ENCODE measurements at regions of chr1 and their contacts with region 1.

Region 1: DNA sequence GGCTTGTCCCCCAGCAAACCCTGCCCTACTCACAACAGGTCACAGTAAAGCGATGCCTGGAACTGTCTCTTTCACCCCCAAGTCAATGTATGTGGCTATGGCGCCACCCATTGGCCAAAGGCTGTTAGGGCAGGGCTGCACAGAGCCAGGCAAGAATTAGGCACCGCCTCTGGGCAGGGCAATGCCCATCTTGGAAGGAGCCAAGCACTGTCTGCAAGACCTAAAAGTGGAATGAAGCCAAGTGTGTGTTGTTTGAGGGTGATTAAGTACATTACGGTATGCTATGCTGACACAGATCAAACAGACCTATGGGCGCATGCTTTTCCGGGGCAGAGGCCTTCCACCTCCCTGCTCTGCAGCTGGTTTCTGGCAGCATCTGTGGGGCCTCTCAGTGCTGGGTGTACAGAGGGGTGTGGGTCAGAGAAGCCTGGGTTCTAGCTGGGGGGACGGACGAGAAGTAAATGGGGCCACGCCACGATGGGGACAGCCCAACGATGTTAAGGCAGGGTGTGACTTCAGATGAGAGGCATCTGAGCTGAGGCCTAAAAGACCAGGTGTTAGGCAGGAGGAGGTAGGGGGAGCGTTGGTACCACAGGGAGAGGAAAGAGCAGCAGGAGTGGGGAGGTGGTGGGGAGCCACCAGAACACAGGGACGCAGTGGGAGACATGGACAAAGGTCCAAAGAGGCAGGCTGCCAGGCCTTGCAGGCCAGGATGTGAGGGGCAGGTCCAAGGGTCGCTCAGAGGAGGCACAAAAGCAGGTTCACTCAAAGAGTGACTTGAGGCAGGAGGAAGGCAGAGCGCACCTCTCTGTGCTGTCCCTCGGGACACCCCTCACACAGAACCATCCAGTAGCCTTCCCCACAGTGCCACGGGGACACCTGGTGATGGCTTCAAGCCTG is 49.8 kb downstream of the ACOT7 start:
- DNase-seq: peak; percentile 88
- CTCF ChIP-seq: peak; percentile 98

Region 2: DNA sequence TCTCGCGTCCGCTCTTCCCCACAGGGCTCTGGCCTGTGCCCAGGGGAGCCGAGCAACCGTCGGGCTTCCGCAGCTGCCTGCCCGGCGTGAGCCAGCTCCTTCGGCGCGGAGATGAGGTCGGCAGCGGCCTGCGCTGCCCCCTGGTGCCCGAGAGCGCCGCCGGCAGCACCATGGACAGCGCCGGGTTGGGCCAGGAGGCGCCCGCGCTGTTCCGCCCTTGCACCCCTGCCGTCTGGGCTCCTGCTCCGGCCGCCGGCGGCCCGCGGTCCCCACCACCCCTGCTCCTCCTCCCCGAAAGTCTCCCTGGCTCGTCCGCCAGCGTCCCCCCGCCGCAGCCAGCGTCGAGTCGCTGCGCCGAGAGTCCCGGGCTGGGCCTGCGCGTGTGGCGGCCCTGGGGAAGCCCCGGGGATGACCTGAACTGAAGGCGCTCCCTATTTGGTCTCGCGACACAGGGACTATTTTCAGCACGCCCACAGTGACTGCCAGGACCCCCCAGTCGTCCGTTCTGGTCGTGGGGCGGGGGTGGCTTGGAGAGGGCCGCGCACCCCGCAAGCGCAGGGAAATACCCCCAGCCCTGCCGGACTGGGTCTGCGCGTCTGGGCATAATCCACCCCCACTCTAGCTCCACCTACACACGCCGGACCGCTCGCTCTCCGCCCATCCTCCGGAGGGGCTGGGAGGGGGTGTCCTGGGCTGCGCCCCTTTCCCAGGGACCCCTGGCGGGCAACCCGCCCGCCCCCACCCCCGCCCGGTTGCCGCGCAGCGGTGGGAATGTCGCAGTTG is 98.5 kb before region 1 on chr1:
- in situ Hi-C with region 1: loop called (anchors 5 kb)
- DNase-seq: peak; percentile 92
- CTCF ChIP-seq: peak; percentile 95

Region 3: DNA sequence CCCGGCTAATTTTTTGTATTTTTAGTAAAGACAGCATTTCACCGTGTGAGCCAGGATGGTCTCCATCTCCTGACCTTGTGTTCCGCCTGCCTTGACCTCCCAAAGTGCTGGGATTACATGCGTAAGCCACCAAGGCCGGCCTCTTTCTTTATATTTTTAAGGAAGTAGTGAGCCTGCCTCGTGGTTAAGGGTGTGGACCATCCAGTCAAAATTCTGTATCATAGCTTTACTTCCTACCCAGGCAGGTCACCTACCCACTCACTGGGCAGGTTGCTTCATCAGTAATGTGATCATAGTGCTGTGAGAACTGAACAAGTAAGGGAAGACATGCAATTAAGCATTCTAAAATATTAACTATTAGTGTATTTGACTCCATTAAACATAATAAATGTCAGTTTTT is 57.9 kb after region 1 on chr1:
- in situ Hi-C with region 1: loop called (anchors 10 kb)
- DNase-seq: no peak
- CTCF ChIP-seq: no peak

Measured in GM13976 (cell line).